Activated CD8-positive, alpha-beta memory T cell treated with anti-CD3 and anti-CD28 coated beads, Interleukin-2, amount 10 ng/mL, durations not matched to agents 7 days and 5 days (primary cell): ENCODE measurements at regions of chr3 and their contacts with region 1.

Region 1: DNA sequence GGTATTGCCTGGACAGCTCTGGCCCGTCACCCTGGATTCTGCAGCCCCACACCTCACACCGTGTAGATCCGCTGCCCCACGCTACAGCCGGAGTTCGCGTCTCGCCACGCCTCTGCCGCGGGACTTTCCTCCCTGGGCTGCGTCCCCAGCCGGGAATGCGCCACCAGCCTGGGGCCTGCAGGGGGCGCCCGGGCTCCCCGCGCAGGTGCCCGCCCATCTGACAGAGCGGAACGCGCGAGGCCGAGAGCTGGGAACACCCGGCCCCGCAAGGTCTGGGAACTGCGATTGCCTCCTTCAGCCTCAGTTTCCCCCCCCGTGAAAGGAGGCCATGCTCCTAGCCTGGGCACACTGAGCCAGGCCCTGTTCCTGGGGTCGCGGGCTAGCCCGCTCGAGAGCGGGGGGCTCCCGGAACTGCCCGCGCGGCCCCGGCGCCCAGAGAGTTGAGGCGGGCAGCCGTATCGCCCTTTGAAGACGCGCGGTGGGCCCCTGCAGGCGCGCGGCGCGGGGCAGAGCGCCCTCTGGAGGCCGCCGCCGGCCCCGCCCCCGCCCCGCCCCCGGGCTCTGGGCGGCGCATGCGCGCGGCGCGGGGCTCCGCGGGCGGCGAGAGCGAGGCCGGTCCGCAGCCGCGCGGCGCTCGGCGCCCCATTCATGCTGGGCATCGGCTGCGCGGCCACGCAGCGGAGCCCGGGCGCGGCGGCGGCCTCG is at the start of gene PLXNA1:
- DNase-seq: peak; percentile 87
- ATAC-seq: peak; percentile 86
- H3K4me3 Mint-ChIP-seq: peak within 1 kb of the TSS; percentile 75
- H3K27ac Mint-ChIP-seq: peak within 1 kb of the TSS; percentile 75
- H3K4me1 Mint-ChIP-seq: peaks cover 19% of the 10 kb centered on the region
- H3K27me3 Mint-ChIP-seq: peaks cover 25% of the 10 kb centered on the region
- total RNA-seq, gene PLXNA1: 4.6 to 15.0 TPM

Region 2: GRCh38 chr3:126752303-126752842 is 230.2 kb before region 1 on chr3:
- CTCF ChIA-PET with region 1: interaction called, 18 read pairs
- DNase-seq: peak; percentile 71
- ATAC-seq: peak; percentile 71
- H3K4me3 Mint-ChIP-seq: no peak overlapping the region
- H3K27ac Mint-ChIP-seq: no peak overlapping the region
- H3K4me1 Mint-ChIP-seq: peaks cover 4% of the 10 kb centered on the region
- H3K27me3 Mint-ChIP-seq: no peaks in the 10 kb centered on the region

Region 3: GRCh38 chr3:126911162-126912026 is 71.2 kb before region 1 on chr3:
- CTCF ChIA-PET with region 1: interaction called, 18 read pairs
- DNase-seq: peak; percentile 94
- ATAC-seq: peak; percentile 92
- H3K4me3 Mint-ChIP-seq: peak overlapping the region; percentile 49
- H3K27ac Mint-ChIP-seq: peak overlapping the region; percentile 87
- H3K4me1 Mint-ChIP-seq: peaks cover 66% of the 10 kb centered on the region
- H3K27me3 Mint-ChIP-seq: peaks cover 3% of the 10 kb centered on the region

Region 4: DNA sequence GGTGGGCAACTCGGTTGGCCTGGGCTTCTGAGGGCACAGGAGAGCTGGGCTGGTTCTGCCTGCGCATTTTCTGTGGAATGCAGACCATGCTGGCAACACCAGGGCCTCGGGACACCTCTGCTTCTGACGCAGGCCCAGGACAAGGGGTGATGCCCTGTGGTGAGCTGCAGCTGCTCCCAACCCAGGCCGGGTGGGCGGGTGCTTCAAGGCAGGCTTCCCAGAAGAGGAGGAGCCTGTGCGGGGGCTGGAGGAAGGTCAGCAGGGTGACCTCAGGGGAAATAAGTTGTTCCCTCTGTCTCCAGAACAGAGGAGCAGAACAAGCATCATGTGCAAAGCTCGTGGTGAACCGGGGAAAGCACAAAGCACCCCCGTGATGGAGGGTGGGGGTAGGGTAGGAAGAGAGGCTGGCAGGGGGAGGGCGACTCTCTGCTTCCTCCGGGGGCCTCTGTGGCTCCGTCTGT is 10.7 kb before region 1 on chr3:
- CTCF ChIA-PET with region 1: interaction called, 14 read pairs
- DNase-seq: no peak
- ATAC-seq: no peak
- H3K4me3 Mint-ChIP-seq: no peak overlapping the region
- H3K27ac Mint-ChIP-seq: no peak overlapping the region
- H3K4me1 Mint-ChIP-seq: no peaks in the 10 kb centered on the region
- H3K27me3 Mint-ChIP-seq: peaks cover 24% of the 10 kb centered on the region